ENCODE measurements at regions of chr3 and their contacts with region 1.

Region 1: DNA sequence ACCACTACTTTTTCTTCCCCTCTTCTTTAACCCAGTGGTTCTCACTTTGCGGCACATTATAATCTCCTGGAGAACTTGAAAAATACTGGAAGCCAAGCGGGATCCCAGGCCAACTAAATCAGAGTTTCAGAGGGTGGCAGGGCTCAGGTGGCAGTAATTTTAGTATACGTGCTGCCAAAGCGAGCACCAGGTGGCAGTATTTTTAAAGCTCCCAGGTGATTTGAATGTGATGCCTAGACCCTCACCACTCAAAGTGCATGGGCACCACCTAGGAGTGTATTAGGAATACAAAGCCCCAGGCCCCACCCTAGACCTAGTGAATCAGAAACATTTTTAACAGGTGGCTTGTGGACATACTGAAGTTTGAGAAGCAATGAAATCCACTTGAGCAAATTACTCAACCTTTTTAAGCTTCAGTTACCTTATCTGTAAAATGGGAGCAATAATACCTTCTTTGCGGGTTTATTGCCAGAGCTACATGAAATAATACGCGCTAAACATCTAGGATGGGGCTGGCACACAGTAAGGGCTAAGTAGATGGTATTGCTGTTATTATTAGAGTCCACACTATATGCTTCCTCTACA is 8.3 kb downstream of the B3GALNT1 start:
- DNase-seq: peak; percentile 68
- H3K4me3 Mint-ChIP-seq: no peak overlapping the region
- H3K27ac Mint-ChIP-seq: no peak overlapping the region
- H3K4me1 Mint-ChIP-seq: peaks cover 10% of the 10 kb centered on the region
- H3K27me3 Mint-ChIP-seq: no peaks in the 10 kb centered on the region
- CTCF ChIP-seq: peak; percentile 91

Region 2: GRCh38 chr3:160686955-160687535 is 409.8 kb before region 1 on chr3:
- CTCF ChIA-PET with region 1: no interaction called
- intact Hi-C with region 1: loop called (anchors 10 kb)
- DNase-seq: no peak
- H3K4me3 Mint-ChIP-seq: no peak overlapping the region
- H3K27ac Mint-ChIP-seq: no peak overlapping the region
- H3K4me1 Mint-ChIP-seq: peaks cover 29% of the 10 kb centered on the region
- H3K27me3 Mint-ChIP-seq: no peaks in the 10 kb centered on the region
- CTCF ChIP-seq: peak; percentile 76

Region 3: GRCh38 chr3:160754855-160755747 is 341.8 kb before region 1 on chr3:
- CTCF ChIA-PET with region 1: no interaction called
- intact Hi-C with region 1: no loop called
- DNase-seq: peak; percentile 97
- H3K4me3 Mint-ChIP-seq: peak overlapping the region; percentile 95
- H3K27ac Mint-ChIP-seq: peak overlapping the region; percentile 93
- H3K4me1 Mint-ChIP-seq: peaks cover 23% of the 10 kb centered on the region
- H3K27me3 Mint-ChIP-seq: no peaks in the 10 kb centered on the region
- CTCF ChIP-seq: no peak

Region 4: GRCh38 chr3:161171113-161171512 is 74.2 kb after region 1 on chr3:
- CTCF ChIA-PET with region 1: interaction called, 6 read pairs
- intact Hi-C with region 1: loop called (anchors 1 kb)
- DNase-seq: no peak
- H3K4me3 Mint-ChIP-seq: no peak overlapping the region
- H3K27ac Mint-ChIP-seq: no peak overlapping the region
- H3K4me1 Mint-ChIP-seq: no peaks in the 10 kb centered on the region
- H3K27me3 Mint-ChIP-seq: no peaks in the 10 kb centered on the region
- CTCF ChIP-seq: no peak

Region 5: DNA sequence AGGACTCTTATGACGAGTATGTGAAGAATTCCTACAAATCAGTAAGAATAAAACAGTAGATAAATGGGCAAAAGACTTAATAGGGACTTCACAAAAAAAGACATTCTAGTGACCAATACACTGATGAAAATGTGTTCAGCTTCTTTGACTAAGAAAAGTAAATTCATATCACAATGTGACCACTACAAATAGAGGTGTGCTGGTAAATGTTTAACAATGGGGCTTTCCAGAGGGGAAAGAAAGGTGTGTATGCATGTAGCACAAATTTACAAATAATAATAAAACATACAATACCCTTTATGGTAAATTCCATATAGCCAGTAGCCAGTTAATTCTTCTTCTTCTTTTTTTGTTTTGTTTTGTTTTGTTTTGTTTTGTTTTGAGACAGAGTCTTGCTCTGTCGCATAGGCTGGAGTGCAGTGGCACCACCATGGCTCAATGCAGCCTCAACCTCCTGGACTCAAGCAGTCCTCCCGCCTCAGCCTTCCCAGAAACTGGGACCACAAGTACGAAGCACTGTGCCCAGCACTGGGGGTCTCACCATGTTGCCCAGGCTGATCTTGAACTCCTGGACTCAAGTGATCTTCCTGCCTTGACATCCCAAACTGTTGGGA is 106.7 kb after region 1 on chr3:
- CTCF ChIA-PET with region 1: interaction called, 3 read pairs
- intact Hi-C with region 1: loop called (anchors 2 kb)
- DNase-seq: no peak
- H3K4me3 Mint-ChIP-seq: no peak overlapping the region
- H3K27ac Mint-ChIP-seq: peak overlapping the region; percentile 8
- H3K4me1 Mint-ChIP-seq: peaks cover 15% of the 10 kb centered on the region
- H3K27me3 Mint-ChIP-seq: no peaks in the 10 kb centered on the region
- CTCF ChIP-seq: no peak

Region 6: DNA sequence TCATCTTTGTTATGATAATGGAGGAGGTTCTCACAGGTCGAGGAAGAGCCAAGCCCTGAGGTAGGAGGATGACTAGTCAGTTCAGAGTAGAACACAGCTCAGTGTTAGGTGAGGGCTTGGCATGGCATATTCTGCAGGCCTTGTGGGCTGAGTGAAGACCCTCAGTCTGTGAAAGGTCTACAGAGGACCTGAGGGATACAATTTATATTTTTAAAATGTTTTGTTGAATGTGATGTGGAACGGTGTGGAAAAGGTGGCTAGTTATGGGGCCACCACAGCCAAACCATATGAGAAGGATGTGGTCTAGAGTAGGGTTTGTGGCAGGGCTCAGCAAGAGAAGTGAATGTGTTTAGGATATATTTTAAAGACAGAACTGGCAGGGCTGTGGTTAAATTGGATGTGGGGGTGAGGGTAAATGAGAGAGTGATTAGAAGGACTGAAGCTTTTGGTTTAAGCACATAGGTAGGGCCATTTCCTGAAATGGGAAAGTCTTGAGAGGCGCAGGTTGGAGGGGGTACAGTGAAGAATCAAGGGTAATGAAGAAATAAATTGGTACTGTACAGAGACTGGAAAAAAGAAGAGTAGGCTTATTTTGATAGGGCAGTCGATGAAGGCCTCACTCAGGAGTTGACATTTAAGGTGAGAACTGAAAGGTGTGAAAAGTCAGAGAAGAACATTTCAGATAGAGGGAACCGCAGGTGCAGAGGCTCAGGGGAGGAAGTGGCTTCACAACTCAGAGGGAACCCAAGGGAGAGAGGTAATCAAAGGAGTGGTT is 214.0 kb after region 1 on chr3:
- CTCF ChIA-PET with region 1: no interaction called
- intact Hi-C with region 1: no loop called
- DNase-seq: no peak
- H3K4me3 Mint-ChIP-seq: no peak overlapping the region
- H3K27ac Mint-ChIP-seq: no peak overlapping the region
- H3K4me1 Mint-ChIP-seq: peaks cover 15% of the 10 kb centered on the region
- H3K27me3 Mint-ChIP-seq: no peaks in the 10 kb centered on the region
- CTCF ChIP-seq: no peak

Measured in Calu3 (cell line).